ENCODE measurements at regions of chrX and their contacts with region 1.

Region 1: DNA sequence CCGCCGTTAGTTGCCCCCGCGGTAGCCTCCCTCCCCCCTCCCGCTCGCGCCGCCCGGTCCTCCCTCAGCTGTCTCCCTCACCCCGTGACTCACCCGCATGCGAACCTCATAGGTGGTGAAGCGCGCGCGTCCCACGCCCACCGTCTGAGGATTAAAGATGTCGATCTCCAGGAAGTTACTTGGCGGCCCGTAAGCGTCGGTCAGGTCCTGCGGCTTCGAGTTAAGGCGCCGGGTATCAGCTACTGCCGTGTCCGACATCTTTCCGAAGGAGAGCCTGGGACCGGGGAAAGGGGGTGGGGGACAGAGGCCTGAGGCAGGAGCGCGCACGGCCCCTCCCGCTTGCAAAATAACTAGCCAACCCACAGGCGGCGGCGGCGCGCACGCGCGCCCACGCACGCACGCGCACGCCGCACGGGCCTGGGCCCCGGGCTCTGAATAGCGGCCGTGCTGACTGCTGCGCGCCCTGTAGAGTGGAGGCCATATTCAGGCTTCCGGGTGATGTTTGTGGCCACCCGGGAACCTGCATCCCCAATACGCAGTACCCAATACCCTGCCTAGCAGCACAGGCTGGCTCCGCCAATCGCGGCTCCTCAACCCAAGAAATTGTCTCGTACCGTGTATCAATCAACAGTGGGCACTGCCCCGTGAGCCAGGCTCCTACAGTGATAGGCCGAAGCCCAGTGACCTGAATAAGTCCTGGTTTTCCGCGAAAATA is at the start of gene SNX12:
- DNase-seq: peak; percentile 79
- ATAC-seq: peak; percentile 94
- H3K4me3 Mint-ChIP-seq: peak within 1 kb of the TSS; percentile 94
- H3K27ac Mint-ChIP-seq: peak within 1 kb of the TSS; percentile 95
- H3K4me1 Mint-ChIP-seq: peaks cover 19% of the 10 kb centered on the region
- H3K27me3 Mint-ChIP-seq: peaks cover 3% of the 10 kb centered on the region
- CTCF ChIP-seq: no peak
- total RNA-seq, gene SNX12: 43.2 and 44.8 TPM in 2 replicates

Region 2: DNA sequence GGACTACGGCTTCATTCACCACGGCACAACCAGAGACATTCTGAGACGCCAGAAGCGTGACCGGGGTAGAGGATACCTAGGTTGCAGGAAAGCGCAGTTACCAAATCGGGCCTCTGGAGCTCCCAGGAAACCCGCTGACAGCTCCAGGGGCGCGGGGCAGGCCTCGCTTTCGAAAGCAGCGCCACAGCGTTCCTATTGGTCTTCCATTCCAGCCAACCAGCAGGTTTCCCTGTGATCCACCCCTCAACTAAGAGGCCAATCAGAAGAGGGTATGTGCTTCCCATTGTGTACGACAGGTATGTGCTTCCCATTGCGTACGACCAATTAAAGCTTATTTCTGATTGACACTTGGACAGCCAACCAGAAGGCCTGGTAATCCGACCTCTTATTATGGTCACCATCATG is 15.0 kb before region 1 on chrX:
- CTCF ChIA-PET with region 1: no interaction called
- POLR2A ChIA-PET with region 1: interaction called, 12 read pairs
- intact Hi-C with region 1: no loop called
- DNase-seq: no peak
- ATAC-seq: peak; percentile 72
- H3K4me3 Mint-ChIP-seq: peak overlapping the region; percentile 62
- H3K27ac Mint-ChIP-seq: no peak overlapping the region
- H3K4me1 Mint-ChIP-seq: peaks cover 11% of the 10 kb centered on the region
- H3K27me3 Mint-ChIP-seq: no peaks in the 10 kb centered on the region
- CTCF ChIP-seq: no peak

Region 3: DNA sequence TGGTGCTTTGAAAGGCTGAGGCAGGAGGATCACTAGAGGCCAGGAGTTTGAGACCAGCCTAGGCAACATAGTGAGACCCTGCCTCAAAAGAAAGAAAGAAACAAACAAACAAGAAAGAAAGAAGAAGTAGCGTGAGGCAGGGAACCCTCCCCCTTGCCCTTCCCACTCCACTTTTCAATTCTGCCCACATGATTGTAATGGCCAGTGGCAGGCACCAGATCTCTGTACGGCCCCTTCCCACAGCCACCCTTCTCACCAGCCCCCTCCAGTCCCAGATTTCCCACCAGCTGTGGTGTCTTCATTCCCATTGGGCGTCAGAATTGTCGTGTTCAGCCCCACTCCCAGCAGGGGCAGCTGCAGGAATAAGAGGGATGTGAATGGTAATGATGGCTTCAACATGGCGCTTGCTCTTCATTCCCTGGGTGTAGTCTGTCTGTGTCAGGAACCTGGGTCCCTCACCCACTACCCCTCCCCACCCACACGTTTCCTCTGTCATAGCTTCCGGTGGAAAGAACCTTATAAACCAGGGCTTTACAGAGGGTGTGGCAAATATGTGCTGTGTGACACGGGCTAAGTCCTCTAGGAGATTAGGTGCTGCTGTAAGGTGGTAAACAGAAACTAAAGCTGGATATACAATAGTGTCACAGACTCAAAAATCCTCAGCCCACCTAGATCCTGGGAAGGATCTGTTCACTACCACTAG is 43.1 kb after region 1 on chrX and contains the start of gene IL2RG:
- CTCF ChIA-PET with region 1: no interaction called
- POLR2A ChIA-PET with region 1: interaction called, 20 read pairs
- intact Hi-C with region 1: loop called (anchors 1 kb)
- DNase-seq: peak; percentile 37
- ATAC-seq: peak; percentile 90
- H3K4me3 Mint-ChIP-seq: peak within 1 kb of the TSS; percentile 95
- H3K27ac Mint-ChIP-seq: peak within 1 kb of the TSS; percentile 99
- H3K4me1 Mint-ChIP-seq: peaks cover 67% of the 10 kb centered on the region
- H3K27me3 Mint-ChIP-seq: no peaks in the 10 kb centered on the region
- CTCF ChIP-seq: no peak
- total RNA-seq, gene IL2RG: 261 and 264 TPM in 2 replicates

Region 4: GRCh38 chrX:71128915-71129765 is 60.9 kb after region 1 on chrX:
- CTCF ChIA-PET with region 1: no interaction called
- POLR2A ChIA-PET with region 1: no interaction called
- intact Hi-C with region 1: loop called (anchors 1 kb)
- DNase-seq: peak; percentile 52
- ATAC-seq: peak; percentile 94
- H3K4me3 Mint-ChIP-seq: no peak overlapping the region
- H3K27ac Mint-ChIP-seq: peak overlapping the region; percentile 19
- H3K4me1 Mint-ChIP-seq: peaks cover 9% of the 10 kb centered on the region
- H3K27me3 Mint-ChIP-seq: no peaks in the 10 kb centered on the region
- CTCF ChIP-seq: no peak

Region 5: GRCh38 chrX:71365876-71366673 is 297.9 kb after region 1 on chrX and contains the start of gene TAF1:
- CTCF ChIA-PET with region 1: no interaction called
- POLR2A ChIA-PET with region 1: interaction called, 7 read pairs
- intact Hi-C with region 1: loop called (anchors 1 kb)
- DNase-seq: peak; percentile 69
- ATAC-seq: peak; percentile 87
- H3K4me3 Mint-ChIP-seq: peak within 1 kb of the TSS; percentile 99
- H3K27ac Mint-ChIP-seq: peak within 1 kb of the TSS; percentile 99
- H3K4me1 Mint-ChIP-seq: peaks cover 21% of the 10 kb centered on the region
- H3K27me3 Mint-ChIP-seq: no peaks in the 10 kb centered on the region
- CTCF ChIP-seq: no peak
- total RNA-seq, gene TAF1: 64.0 and 70.0 TPM in 2 replicates

Measured in activated B cell treated with CpG ODN at 0.5 μM for 24 hours (primary cell).